Naive thymus-derived CD4-positive, alpha-beta T cell (primary cell): ENCODE measurements at regions of chr10 and their contacts with region 1.

Region 1: GRCh38 chr10:60032723-60033122 is 126.4 kb upstream of the CCDC6 start:
- DNase-seq: peak in 7 of 9 donors; percentile 5 to 31 (median 12)
- ATAC-seq: peak; percentile 86
- H3K4me3 ChIP-seq: no peak overlapping the region
- H3K4me3 Mint-ChIP-seq: no peak overlapping the region
- H3K27ac ChIP-seq: no peak overlapping the region
- H3K27ac Mint-ChIP-seq: peak overlapping the region in 1 of 9 donors; percentile 32
- H3K4me1 ChIP-seq: no peaks in the 10 kb centered on the region
- H3K4me1 Mint-ChIP-seq: peaks cover 0 to 9% (median 0%) of the 10 kb centered on the region in 7 donors
- H3K27me3 ChIP-seq: no peaks in the 10 kb centered on the region
- H3K27me3 Mint-ChIP-seq: no peaks in the 10 kb centered on the region

Region 2: GRCh38 chr10:58781873-58782488 is 1250.7 kb before region 1 on chr10:
- CTCF ChIA-PET with region 1: no interaction called
- POLR2A ChIA-PET with region 1: no interaction called
- intact Hi-C with region 1: loop called in 1 of 2 experiments (anchors 5 kb)
- DNase-seq: peak in 2 of 9 donors; percentile 1 to 5
- ATAC-seq: no peak
- H3K4me3 ChIP-seq: no peak overlapping the region
- H3K4me3 Mint-ChIP-seq: no peak overlapping the region
- H3K27ac ChIP-seq: no peak overlapping the region
- H3K27ac Mint-ChIP-seq: no peak overlapping the region
- H3K4me1 ChIP-seq: no peaks in the 10 kb centered on the region
- H3K4me1 Mint-ChIP-seq: no peaks in the 10 kb centered on the region
- H3K27me3 ChIP-seq: no peaks in the 10 kb centered on the region
- H3K27me3 Mint-ChIP-seq: peaks cover 0 to 13% (median 0%) of the 10 kb centered on the region in 5 donors

Region 3: GRCh38 chr10:59240582-59241183 is 792.0 kb before region 1 on chr10:
- CTCF ChIA-PET with region 1: no interaction called
- POLR2A ChIA-PET with region 1: no interaction called
- intact Hi-C with region 1: no loop called
- DNase-seq: no peak
- ATAC-seq: no peak
- H3K4me3 ChIP-seq: no peak overlapping the region
- H3K4me3 Mint-ChIP-seq: no peak overlapping the region
- H3K27ac ChIP-seq: no peak overlapping the region
- H3K27ac Mint-ChIP-seq: no peak overlapping the region
- H3K4me1 ChIP-seq: no peaks in the 10 kb centered on the region
- H3K4me1 Mint-ChIP-seq: no peaks in the 10 kb centered on the region
- H3K27me3 ChIP-seq: no peaks in the 10 kb centered on the region
- H3K27me3 Mint-ChIP-seq: peaks cover 0 to 6% (median 0%) of the 10 kb centered on the region in 5 donors

Region 4: DNA sequence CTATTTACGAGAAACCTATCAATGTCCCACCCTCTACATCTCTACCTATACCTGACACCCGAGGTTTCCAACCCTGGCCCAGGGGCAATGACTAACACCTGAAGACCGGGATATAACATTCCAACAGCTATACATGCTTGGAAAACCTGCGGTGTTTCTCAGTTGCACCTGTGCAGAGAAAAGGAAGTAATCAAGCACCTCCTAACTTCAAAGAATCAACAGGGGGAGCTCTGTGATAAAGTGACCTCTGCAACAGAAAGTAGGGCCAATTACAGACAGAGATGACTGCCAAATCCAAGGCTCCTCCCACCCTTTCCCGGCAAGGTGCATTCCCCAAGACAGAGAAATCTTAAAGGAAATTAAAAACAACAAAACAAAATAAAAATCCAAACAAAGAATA is 167.6 kb before region 1 on chr10:
- CTCF ChIA-PET with region 1: no interaction called
- POLR2A ChIA-PET with region 1: no interaction called
- intact Hi-C with region 1: loop called (anchors 1 to 2 kb)
- DNase-seq: peak in 5 of 9 donors; percentile 9 to 27 (median 16)
- ATAC-seq: peak; percentile 59
- H3K4me3 ChIP-seq: no peak overlapping the region
- H3K4me3 Mint-ChIP-seq: peak overlapping the region in 9 of 10 donors; percentile 1 to 60 (median 41)
- H3K27ac ChIP-seq: no peak overlapping the region
- H3K27ac Mint-ChIP-seq: peak overlapping the region in 8 of 9 donors; percentile 0 to 77 (median 58)
- H3K4me1 ChIP-seq: peaks cover 4 to 14% of the 10 kb centered on the region in 2 donors
- H3K4me1 Mint-ChIP-seq: peaks cover 41 to 80% (median 64%) of the 10 kb centered on the region in 7 donors
- H3K27me3 ChIP-seq: no peaks in the 10 kb centered on the region
- H3K27me3 Mint-ChIP-seq: no peaks in the 10 kb centered on the region